Lower leg skin (tissue), 4 donors: ENCODE measurements at regions of chr5 and their contacts with region 1.

Region 1: DNA sequence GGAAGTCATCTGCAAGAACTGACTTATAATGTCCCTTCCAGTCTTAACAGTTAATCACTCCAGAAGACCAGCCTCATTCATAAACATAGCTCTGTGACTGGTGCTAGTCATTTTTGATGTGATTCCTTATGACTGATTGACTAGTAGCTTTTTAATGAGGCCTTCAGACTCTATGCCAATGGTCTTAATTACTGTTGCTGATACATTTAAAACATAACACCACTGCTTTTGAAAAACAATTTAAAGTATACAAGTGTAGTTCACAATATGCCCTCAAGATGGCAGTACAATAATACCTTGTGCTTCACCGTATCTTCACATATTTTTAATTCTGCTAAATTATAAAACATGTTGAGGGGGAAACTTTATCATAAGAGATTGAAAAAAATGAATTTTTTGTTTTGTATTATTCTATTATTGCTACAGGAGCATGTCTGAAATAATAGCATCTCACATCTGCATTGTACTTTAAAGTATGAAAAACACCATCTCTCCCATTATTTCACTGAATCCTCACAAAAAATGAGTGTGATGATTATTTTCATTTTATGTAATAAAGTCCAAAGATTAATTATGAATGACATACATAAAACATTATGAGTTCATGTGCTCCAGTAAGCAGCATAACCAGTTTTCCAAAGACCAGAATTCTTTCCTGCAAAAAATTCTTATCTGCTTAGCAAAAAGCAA is 55.2 kb upstream of the SHISAL2B start:
- DNase-seq: no peak
- H3K4me3 ChIP-seq: no peak overlapping the region
- CTCF ChIP-seq: no peak
- POLR2A ChIP-seq: no peak

Region 2: DNA sequence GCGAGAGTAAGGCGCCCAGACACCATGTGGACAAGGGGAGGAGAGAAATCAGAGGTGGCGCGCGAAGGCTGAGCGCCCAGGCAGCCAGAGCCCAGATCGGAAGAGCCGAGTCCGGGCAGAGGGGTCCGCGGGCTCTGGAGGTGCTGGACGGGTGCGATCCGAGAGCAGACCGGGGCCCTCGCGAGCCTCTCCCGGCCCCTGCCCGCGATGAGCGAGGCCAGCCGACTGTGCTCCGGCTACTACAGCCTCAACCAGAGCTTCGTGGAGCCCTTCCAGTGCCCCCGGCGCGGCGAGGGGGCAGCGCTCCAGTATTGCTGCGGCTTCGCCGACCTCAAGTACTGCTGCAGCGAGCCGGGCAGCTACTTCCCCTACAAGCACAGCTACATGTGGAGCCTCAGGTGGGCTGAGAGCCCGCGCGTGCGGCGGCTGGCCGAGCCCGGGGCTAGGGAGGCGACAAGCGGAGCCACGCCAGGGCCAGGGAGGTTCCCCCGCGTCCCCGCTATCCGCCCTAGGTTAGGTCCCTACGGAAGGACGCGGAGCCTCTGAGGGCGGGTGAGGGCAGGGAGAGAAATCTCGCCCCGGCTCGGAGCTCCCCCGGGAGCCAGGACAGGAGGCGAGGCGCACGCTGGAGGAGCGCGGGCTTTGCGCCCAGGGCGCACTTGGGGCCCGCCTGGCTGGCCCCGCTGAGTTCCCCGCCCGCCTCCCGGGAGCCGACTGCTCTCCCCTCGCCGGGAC is 55.4 kb after region 1 on chr5 and contains the start of gene SHISAL2B:
- intact Hi-C with region 1: no loop called
- DNase-seq: no peak
- H3K4me3 ChIP-seq: no peak within 1 kb of the TSS
- CTCF ChIP-seq: no peak
- POLR2A ChIP-seq: no peak
- total RNA-seq, gene SHISAL2B: not detected

Region 3: DNA sequence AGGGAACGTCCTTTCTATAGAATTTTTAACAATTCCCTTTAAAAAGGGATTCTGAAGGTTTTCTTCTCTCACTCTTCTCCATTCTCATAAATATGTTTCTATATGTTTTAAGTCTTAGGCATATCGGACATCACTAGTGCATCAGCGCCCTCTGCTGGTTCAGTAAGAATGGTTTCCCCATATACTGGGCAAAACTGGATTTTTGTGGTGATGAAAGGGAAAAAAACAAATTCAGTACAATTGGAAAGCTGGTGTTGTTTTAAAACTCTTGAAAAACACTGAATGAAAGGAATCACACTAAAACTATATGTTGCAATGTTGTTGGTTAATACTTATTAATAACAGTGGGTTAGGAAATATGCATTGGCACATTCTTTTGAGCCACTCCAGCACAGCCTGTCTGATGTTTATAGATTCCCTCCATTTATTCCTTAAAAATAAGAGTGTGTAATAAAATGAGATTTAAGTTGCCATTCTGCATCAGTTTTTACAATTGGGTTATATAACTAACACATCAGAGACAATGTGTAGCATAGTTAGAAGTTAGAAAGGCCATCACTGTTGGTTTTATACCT is 149.4 kb after region 1 on chr5:
- intact Hi-C with region 1: loop called (anchors 5 kb)
- DNase-seq: peak; percentile 75 to 90
- H3K4me3 ChIP-seq: no peak overlapping the region
- CTCF ChIP-seq: no peak
- POLR2A ChIP-seq: no peak